IMR-90 (cell line): ENCODE measurements at regions of chr5 and their contacts with region 1.

Region 1: DNA sequence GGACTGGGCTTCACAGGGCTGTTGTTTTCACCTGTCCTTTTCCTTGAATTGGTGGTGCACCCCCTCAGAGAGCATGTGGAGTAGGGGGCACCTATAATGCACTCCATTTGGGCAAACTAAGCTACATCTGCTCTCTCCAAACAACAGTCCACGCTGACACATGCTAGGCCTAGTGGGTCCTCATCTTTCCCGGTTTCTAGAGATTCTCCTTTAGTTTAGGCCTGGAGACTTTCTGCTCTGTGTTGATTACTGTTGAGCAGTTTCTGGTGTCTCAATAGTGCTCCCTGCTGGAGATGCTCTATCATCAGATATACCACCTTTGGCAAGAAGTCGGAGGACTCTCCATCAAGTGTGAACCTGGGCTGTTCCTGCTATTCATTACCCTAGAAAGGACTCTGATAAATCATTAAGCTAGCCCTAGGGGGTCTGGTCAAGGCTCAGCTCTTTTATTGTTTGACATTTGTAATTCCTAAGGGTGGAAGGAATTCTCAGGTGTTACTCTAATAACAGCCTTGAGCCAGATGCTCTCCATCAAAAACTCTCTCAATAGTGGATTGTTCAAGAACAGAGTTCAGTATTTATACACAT is 64.0 kb upstream of the FYB1 start:
- DNase-seq: peak; percentile 76
- ATAC-seq: peak; percentile 95
- H3K4me3 ChIP-seq: no peak overlapping the region
- H3K27ac ChIP-seq: no peak overlapping the region
- H3K4me1 ChIP-seq: no peaks in the 10 kb centered on the region
- H3K27me3 ChIP-seq: peaks cover 1% of the 10 kb centered on the region; the same call in 1 of the 2 replicates
- CTCF ChIP-seq: peak; percentile 69
- POLR2A ChIP-seq: no peak
- RAD21 ChIP-seq: peak; percentile 80

Region 2: GRCh38 chr5:38208782-38209378 is 1074.4 kb before region 1 on chr5:
- CTCF ChIA-PET with region 1: no interaction called
- POLR2A ChIA-PET with region 1: no interaction called
- dilution Hi-C with region 1: no loop called
- in situ Hi-C with region 1: no loop called
- intact Hi-C with region 1: loop called (anchors 5 kb)
- DNase-seq: peak; percentile 31
- ATAC-seq: no peak
- H3K4me3 ChIP-seq: no peak overlapping the region
- H3K27ac ChIP-seq: no peak overlapping the region
- H3K4me1 ChIP-seq: no peaks in the 10 kb centered on the region
- H3K27me3 ChIP-seq: no peaks in the 10 kb centered on the region; the same call in 1 of the 2 replicates
- CTCF ChIP-seq: peak; percentile 41
- POLR2A ChIP-seq: no peak
- RAD21 ChIP-seq: peak; percentile 53

Region 3: GRCh38 chr5:38695021-38695958 is 588.0 kb before region 1 on chr5:
- CTCF ChIA-PET with region 1: no interaction called
- POLR2A ChIA-PET with region 1: no interaction called
- dilution Hi-C with region 1: no loop called
- in situ Hi-C with region 1: no loop called
- intact Hi-C with region 1: no loop called
- DNase-seq: no peak
- ATAC-seq: peak; percentile 81
- H3K4me3 ChIP-seq: no peak overlapping the region
- H3K27ac ChIP-seq: no peak overlapping the region
- H3K4me1 ChIP-seq: peaks cover 6% of the 10 kb centered on the region; the same call in 1 of the 2 replicates
- H3K27me3 ChIP-seq: no peaks in the 10 kb centered on the region; the same call in none of the 2 replicates
- CTCF ChIP-seq: no peak
- POLR2A ChIP-seq: no peak
- RAD21 ChIP-seq: no peak

Region 4: GRCh38 chr5:38845526-38846378 is 437.6 kb before region 1 on chr5 and contains the start of gene OSMR:
- CTCF ChIA-PET with region 1: no interaction called
- POLR2A ChIA-PET with region 1: no interaction called
- dilution Hi-C with region 1: no loop called
- in situ Hi-C with region 1: no loop called
- intact Hi-C with region 1: loop called (anchors 10 kb)
- DNase-seq: peak; percentile 98
- ATAC-seq: peak; percentile 95
- H3K4me3 ChIP-seq: peak within 1 kb of the TSS; percentile 93
- H3K27ac ChIP-seq: peak within 1 kb of the TSS; percentile 99
- H3K4me1 ChIP-seq: peaks cover 12% of the 10 kb centered on the region
- H3K27me3 ChIP-seq: no peaks in the 10 kb centered on the region
- CTCF ChIP-seq: no peak
- POLR2A ChIP-seq: peak; percentile 91
- RAD21 ChIP-seq: peak; percentile 1; the same call in 1 of the 2 replicates
- total RNA-seq, gene OSMR: 38.9 and 41.6 TPM in 2 replicates

Region 5: DNA sequence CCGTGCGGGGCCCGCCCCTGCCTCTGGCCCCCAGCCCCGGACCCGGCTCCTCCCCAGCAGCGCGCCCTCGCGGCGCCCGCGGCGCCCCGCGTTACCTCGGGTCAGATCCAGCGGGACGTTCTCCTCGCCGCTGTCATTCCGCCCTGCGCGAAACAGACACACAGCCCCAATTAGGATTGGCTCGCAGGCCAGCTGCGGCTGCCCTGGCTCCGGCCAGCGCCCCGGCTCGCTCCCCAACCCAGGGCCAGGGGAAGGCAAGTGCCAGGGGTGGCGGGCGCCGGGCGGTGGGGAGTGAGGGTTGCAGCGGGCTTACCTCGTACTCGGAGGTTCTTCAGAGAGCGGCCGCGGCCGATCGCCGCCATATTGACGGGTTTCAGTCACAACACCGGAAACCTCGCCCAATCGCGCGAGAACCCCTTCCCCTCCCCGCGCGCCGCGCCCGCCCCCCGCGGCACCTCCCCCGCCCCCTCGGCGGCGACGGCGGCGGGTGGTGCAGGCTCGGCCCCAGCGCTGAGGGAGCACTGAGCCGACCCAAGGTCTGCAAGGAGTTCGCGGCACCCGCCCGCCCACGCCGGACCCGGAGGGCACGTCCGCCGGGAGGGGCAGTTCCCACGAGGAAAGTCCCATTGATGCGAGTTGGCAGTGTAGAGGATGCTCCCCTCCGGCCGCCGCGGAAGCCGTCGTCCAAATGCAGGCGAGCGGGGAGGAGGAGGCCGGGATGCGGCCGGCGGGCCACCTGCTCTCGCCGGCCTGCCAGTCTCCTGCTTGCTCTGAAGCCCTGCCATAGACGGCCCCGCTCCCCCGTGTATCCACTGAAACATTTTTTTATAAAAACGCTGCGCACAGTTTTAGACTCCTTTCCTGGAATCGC is 209.1 kb before region 1 on chr5 and contains the start of gene RICTOR:
- CTCF ChIA-PET with region 1: no interaction called
- POLR2A ChIA-PET with region 1: no interaction called
- dilution Hi-C with region 1: no loop called
- in situ Hi-C with region 1: no loop called
- intact Hi-C with region 1: loop called (anchors 2 kb)
- DNase-seq: peak; percentile 82
- ATAC-seq: peak; percentile 92
- H3K4me3 ChIP-seq: peak within 1 kb of the TSS; percentile 97
- H3K27ac ChIP-seq: peak within 1 kb of the TSS; percentile 99
- H3K4me1 ChIP-seq: no peaks in the 10 kb centered on the region
- H3K27me3 ChIP-seq: no peaks in the 10 kb centered on the region
- CTCF ChIP-seq: no peak
- POLR2A ChIP-seq: peak; percentile 82
- RAD21 ChIP-seq: no peak
- total RNA-seq, gene RICTOR: 35.7 and 45.0 TPM in 2 replicates

Region 6: GRCh38 chr5:39217365-39218281 is 65.7 kb before region 1 on chr5:
- CTCF ChIA-PET with region 1: interaction called, 18 read pairs
- POLR2A ChIA-PET with region 1: no interaction called
- dilution Hi-C with region 1: no loop called
- in situ Hi-C with region 1: no loop called
- intact Hi-C with region 1: loop called (anchors 5 kb)
- DNase-seq: peak; percentile 80
- ATAC-seq: peak; percentile 94
- H3K4me3 ChIP-seq: no peak overlapping the region
- H3K27ac ChIP-seq: no peak overlapping the region
- H3K4me1 ChIP-seq: no peaks in the 10 kb centered on the region
- H3K27me3 ChIP-seq: no peaks in the 10 kb centered on the region; the same call in none of the 2 replicates
- CTCF ChIP-seq: peak; percentile 89
- POLR2A ChIP-seq: no peak
- RAD21 ChIP-seq: peak; percentile 76